CD8-positive, alpha-beta T cell (primary cell): ENCODE measurements at regions of chr14 and their contacts with region 1.

Region 1: DNA sequence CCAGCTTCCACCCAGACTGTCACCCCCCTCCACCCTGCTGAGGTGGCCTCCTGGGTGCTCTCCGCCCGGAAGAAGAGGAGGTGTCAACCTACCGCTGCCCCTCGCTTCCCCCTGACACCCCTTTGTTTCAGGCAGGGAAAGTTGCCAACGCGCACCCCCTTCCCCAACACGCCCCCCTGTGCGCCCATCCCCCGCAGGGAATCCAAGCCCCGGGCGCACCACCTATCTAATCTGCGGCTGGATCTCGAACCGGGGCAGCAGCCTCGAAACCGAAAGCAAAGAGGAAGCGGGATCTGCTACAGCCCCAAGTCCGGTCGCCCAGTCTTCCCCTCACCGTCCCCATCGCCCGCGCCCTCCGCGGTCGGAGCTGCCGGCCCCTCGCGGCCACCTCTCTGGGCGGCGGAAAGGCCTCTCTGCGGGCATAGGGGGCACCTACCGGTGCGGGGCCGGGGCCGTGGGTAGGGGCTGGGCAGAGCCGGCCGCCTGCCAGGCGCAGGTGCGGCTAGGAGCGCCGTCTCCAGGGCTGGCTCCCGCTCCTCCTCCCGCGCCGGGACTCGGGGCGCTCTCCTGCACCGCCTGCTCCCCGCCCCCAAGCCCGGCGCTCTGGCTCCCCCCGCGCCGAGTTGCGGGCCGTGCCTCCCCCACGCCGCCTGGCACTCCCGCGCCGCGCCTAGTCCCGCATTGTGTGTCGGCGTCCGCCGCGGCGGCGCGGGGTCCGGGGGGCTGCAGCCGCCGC is 18.3 kb upstream of the PLEKHH1 start:
- DNase-seq: peak in 8 of 9 experiments; percentile 11 to 75 (median 43)
- ATAC-seq: peak; percentile 71
- H3K4me3 ChIP-seq: peak overlapping the region; percentile 71 to 75
- H3K4me3 Mint-ChIP-seq: peak overlapping the region; percentile 91
- H3K27ac ChIP-seq: peak overlapping the region; percentile 62 to 79
- H3K27ac Mint-ChIP-seq: peak overlapping the region; percentile 89
- H3K4me1 ChIP-seq: peaks cover 16% of the 10 kb centered on the region
- H3K4me1 Mint-ChIP-seq: peaks cover 36% of the 10 kb centered on the region
- H3K27me3 ChIP-seq: no peaks in the 10 kb centered on the region
- H3K27me3 Mint-ChIP-seq: no peaks in the 10 kb centered on the region
- CTCF ChIP-seq: no peak

Region 2: GRCh38 chr14:67467179-67468080 is 47.4 kb before region 1 on chr14:
- CTCF ChIA-PET with region 1: no interaction called
- POLR2A ChIA-PET with region 1: interaction called, 4 read pairs
- intact Hi-C with region 1: loop called in 1 of 2 experiments (anchors 10 kb)
- DNase-seq: peak in 2 of 9 experiments; percentile 33 to 45
- ATAC-seq: peak; percentile 44
- H3K4me3 ChIP-seq: no peak overlapping the region
- H3K4me3 Mint-ChIP-seq: no peak overlapping the region
- H3K27ac ChIP-seq: no peak overlapping the region
- H3K27ac Mint-ChIP-seq: no peak overlapping the region
- H3K4me1 ChIP-seq: peaks cover 42% of the 10 kb centered on the region
- H3K4me1 Mint-ChIP-seq: peaks cover 46% of the 10 kb centered on the region
- H3K27me3 ChIP-seq: no peaks in the 10 kb centered on the region
- H3K27me3 Mint-ChIP-seq: no peaks in the 10 kb centered on the region
- CTCF ChIP-seq: no peak

Region 3: GRCh38 chr14:67487937-67488893 is 26.6 kb before region 1 on chr14 and contains the start of gene TMEM229B:
- CTCF ChIA-PET with region 1: interaction called, 4 read pairs
- POLR2A ChIA-PET with region 1: interaction called, 29 read pairs
- intact Hi-C with region 1: loop called (anchors 1 to 2 kb)
- DNase-seq: peak; percentile 43 to 90 (median 77)
- ATAC-seq: peak; percentile 96
- H3K4me3 ChIP-seq: peak within 1 kb of the TSS; percentile 68 to 84
- H3K4me3 Mint-ChIP-seq: peak within 1 kb of the TSS; percentile 99
- H3K27ac ChIP-seq: peak within 1 kb of the TSS; percentile 92 to 93
- H3K27ac Mint-ChIP-seq: peak within 1 kb of the TSS; percentile 100
- H3K4me1 ChIP-seq: peaks cover 51% of the 10 kb centered on the region
- H3K4me1 Mint-ChIP-seq: peaks cover 79% of the 10 kb centered on the region
- H3K27me3 ChIP-seq: no peaks in the 10 kb centered on the region
- H3K27me3 Mint-ChIP-seq: no peaks in the 10 kb centered on the region
- CTCF ChIP-seq: no peak
- total RNA-seq, gene TMEM229B: 4.5 to 4.8 TPM